Pancreas (tissue), 10 donors: ENCODE measurements at regions of chr7 and their contacts with region 1.

Region 1: GRCh38 chr7:137454246-137454724 is 110.8 kb upstream of the PTN start:
- DNase-seq: no peak
- ATAC-seq: peak in 3 of 4 donors; percentile 70 to 77 (median 76)
- H3K4me3 ChIP-seq: no peak overlapping the region
- H3K27ac ChIP-seq: no peak overlapping the region
- H3K4me1 ChIP-seq: no peaks in the 10 kb centered on the region
- H3K27me3 ChIP-seq: peaks cover 0 to 9% (median 0%) of the 10 kb centered on the region in 4 donors
- CTCF ChIP-seq: peak; percentile 28 to 61 (median 48)

Region 2: DNA sequence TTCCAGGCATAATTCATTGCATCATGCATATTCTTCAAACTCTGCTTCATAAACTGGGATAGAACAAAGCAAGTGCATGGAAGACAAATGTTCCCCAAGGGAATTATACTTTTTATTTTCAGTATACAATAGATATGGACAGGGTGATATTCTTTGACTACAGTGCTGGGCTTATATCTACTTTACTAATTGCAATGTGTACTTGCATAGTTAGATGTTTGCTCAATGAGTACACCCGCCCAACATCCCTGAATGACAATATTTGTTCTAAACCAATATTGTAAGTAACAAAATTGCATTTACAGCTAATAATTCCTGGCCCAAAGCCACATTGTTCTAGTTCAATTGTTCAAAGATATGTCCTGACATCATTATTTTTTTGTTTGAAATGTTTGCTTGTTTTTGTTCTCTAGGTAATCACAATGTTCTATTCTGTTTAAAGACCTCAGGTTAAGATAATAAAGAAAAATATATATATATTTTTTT is 282.1 kb before region 1 on chr7:
- intact Hi-C with region 1: loop called in 1 of 3 experiments (anchors 10 kb)
- DNase-seq: no peak
- ATAC-seq: no peak
- H3K4me3 ChIP-seq: no peak overlapping the region
- H3K27ac ChIP-seq: no peak overlapping the region
- H3K4me1 ChIP-seq: no peaks in the 10 kb centered on the region
- H3K27me3 ChIP-seq: peaks cover 0 to 4% (median 0%) of the 10 kb centered on the region in 4 donors
- CTCF ChIP-seq: no peak

Region 3: DNA sequence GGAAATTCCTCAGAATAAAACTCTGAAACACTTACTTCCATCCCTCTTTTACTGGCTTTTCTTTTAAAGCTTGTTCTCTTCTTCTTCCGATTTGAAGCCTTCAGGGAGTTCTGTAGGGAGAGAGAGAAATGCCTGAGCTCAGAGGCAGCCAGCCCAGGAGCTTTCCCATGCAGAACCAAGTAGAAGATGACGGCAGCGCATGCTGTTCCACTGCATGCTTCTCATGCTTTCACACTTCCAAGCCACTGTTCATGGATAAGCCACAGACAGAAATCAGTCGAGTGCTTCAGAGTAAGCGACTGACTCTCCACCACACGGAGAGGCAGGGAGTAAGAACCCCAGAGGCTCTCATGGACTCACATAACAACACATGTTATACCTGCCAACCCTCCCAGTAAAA is 155.2 kb after region 1 on chr7:
- intact Hi-C with region 1: no loop called
- DNase-seq: no peak
- ATAC-seq: no peak
- H3K4me3 ChIP-seq: no peak overlapping the region
- H3K27ac ChIP-seq: no peak overlapping the region
- H3K4me1 ChIP-seq: no peaks in the 10 kb centered on the region
- H3K27me3 ChIP-seq: peaks cover 0 to 6% (median 2%) of the 10 kb centered on the region in 4 donors
- CTCF ChIP-seq: no peak